HepG2 (cell line): ENCODE measurements at regions of chr14 and their contacts with region 1.

Region 1: DNA sequence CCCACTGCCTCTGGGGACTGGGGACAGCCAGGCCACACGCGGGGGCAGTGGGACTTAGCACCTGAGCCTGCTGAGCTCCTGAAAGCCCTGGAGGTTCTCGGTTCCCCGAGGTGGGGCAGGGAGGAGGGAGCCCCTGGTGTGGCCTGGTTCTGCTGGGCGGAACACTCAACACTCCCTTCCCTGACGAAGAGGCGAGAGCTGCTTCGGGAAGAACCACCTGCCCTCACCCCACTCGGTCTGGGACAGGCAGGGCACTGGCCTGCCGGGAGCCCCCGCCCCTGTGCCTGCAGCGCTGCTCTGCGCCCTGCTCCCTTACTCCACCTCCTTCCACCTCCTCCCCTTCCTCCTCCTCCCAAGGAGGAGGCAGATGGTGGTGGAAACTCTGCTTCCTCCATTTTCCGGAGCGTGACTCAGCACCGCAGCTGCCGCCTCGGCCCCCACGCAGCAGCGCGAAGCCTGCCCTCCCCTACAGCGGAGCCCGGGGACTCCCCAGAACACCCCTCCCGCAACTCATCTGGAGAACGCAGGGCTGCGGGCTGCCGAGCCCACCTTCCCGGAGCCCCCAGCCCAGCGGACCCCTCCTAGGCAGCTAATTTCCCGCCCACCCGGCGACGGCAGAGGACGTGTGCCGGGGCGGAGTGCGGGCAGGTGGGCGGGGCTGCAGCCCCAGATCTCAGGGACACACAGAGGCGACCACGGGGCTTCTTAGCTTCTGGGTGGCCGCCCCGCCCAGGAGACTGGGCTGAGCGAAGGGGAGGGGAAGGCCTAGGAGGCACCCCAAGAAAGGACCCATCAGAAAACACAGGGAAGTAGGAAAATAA is 11.7 kb upstream of the INF2 start:
- DNase-seq: no peak
- ATAC-seq: peak; percentile 5
- H3K4me3 ChIP-seq: peak overlapping the region; percentile 41 to 68 (median 52); a peak in 5 of 6 replicates
- H3K27ac ChIP-seq: no peak overlapping the region
- H3K4me1 ChIP-seq: peaks cover 71% of the 10 kb centered on the region
- H3K27me3 ChIP-seq: no peaks in the 10 kb centered on the region; a peak in 1 of 5 replicates
- CTCF ChIP-seq: no peak
- EP300 ChIP-seq: no peak
- POLR2A ChIP-seq: no peak
- RAD21 ChIP-seq: no peak

Region 2: DNA sequence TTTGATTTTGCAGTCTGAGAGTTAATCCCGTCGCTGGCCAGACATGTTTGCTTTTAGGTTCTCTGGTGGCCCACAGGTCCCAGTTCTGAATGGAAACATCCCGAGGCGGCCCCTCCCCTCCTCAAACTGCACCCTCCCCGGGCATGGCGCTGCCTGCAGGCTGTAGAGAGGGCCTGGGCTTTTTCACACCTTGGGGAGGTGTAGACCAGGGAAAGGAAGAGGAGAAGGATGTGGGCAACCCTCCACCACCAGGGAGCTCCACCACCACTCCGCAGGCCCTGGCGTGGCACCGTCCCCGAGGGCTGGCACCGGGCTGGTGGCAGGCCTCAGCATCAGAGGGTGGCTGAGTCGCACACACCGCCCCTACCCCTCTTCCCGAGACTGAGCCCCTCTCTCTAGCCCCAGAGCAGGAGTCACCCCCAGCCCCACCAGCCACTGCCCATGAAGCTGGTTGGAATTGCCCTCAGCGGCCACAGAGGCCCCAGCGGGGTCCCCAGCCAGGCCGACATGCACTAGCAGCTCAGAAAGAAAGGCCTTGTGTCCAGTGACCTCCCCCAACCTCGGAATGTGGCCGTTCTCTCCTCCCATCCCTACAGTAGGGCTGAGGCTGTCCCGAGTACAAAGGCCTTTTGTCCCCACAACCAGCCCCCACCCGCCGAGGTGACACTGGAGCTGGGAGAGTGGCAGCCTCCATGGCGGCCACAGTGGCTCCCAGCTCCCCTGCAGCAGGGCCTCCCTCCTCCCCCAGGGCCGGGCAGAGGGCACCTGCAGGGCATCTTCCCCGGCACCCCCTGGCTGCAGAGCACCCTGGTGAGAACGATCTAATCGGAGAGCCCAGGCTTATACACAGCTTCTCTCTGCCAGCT is 11.8 kb before region 1 on chr14:
- CTCF ChIA-PET with region 1: no interaction called
- POLR2A ChIA-PET with region 1: interaction called, 179 read pairs
- in situ Hi-C with region 1: no loop called
- intact Hi-C with region 1: loop called (anchors 1 kb)
- DNase-seq: peak; percentile 96
- ATAC-seq: peak; percentile 90
- H3K4me3 ChIP-seq: peak overlapping the region; percentile 29 to 69 (median 53); a peak in 5 of 6 replicates
- H3K27ac ChIP-seq: peak overlapping the region; percentile 97
- H3K4me1 ChIP-seq: peaks cover 48% of the 10 kb centered on the region
- H3K27me3 ChIP-seq: peaks cover 0 to 1% of the 10 kb centered on the region in 2 experiments; a peak in 1 of 5 replicates
- CTCF ChIP-seq: peak; percentile 65
- EP300 ChIP-seq: peak; percentile 74 to 87; a peak in 3 of 4 replicates
- POLR2A ChIP-seq: peak; percentile 77 to 88
- RAD21 ChIP-seq: no peak; the same call in none of the 2 replicates

Region 3: DNA sequence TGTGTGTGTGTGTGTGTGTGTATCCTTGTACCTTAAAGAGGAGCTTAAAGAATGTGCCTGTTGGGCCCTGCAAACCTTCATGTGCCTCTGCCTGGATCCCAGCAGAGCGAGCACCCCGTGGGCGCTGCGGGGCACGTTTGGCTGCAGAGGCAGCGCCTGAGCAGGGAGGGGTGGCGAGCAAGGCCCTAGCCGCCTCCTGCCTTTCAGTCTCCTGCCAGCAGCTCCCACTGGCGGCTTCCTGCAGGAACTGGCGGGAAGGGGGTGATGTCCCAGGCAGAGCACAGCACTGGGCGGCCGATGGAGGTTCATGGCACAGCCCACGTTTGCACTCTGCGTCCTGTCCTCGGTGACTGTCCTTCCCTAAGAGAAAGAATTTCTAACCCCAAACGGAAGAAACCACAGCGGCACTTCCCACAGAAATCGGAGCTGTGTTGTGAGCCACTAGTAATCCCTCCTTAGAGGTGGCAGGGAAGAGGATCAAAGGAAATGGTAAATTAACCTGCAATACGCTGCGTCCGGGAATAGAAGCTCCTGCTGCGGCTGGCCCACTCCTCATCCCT is 143.0 kb after region 1 on chr14:
- CTCF ChIA-PET with region 1: no interaction called
- POLR2A ChIA-PET with region 1: no interaction called
- in situ Hi-C with region 1: no loop called
- intact Hi-C with region 1: no loop called
- DNase-seq: peak; percentile 81
- ATAC-seq: peak; percentile 90
- H3K4me3 ChIP-seq: peak overlapping the region; percentile 27 to 68 (median 41); a peak in 5 of 6 replicates
- H3K27ac ChIP-seq: no peak overlapping the region
- H3K4me1 ChIP-seq: peaks cover 42% of the 10 kb centered on the region
- H3K27me3 ChIP-seq: no peaks in the 10 kb centered on the region
- CTCF ChIP-seq: peak; percentile 94
- EP300 ChIP-seq: peak in 1 of 2 experiments; percentile 85; a peak in 1 of 4 replicates
- POLR2A ChIP-seq: peak in 1 of 2 experiments; percentile 32; a peak in 1 of 4 replicates
- RAD21 ChIP-seq: peak; percentile 88

Region 4: GRCh38 chr14:105385698-105386365 is 708.1 kb after region 1 on chr14:
- CTCF ChIA-PET with region 1: no interaction called
- POLR2A ChIA-PET with region 1: no interaction called
- in situ Hi-C with region 1: no loop called
- intact Hi-C with region 1: no loop called
- DNase-seq: no peak
- ATAC-seq: no peak
- H3K4me3 ChIP-seq: no peak overlapping the region
- H3K27ac ChIP-seq: no peak overlapping the region
- H3K4me1 ChIP-seq: no peaks in the 10 kb centered on the region
- H3K27me3 ChIP-seq: no peaks in the 10 kb centered on the region
- CTCF ChIP-seq: no peak
- EP300 ChIP-seq: no peak
- POLR2A ChIP-seq: no peak
- RAD21 ChIP-seq: no peak